ENCODE measurements at regions of chr17 and their contacts with region 1.

Region 1: GRCh38 chr17:79612468-79613194 is 1.8 kb upstream of the RBFOX3 start:
- DNase-seq: peak; percentile 92
- H3K4me3 ChIP-seq: no peak overlapping the region; a peak in 1 of 4 replicates
- H3K27ac ChIP-seq: no peak overlapping the region
- H3K4me1 ChIP-seq: no peaks in the 10 kb centered on the region
- H3K27me3 ChIP-seq: peaks cover 57% of the 10 kb centered on the region
- CTCF ChIP-seq: peak; percentile 73
- EP300 ChIP-seq: no peak
- RAD21 ChIP-seq: peak; percentile 85

Region 2: GRCh38 chr17:79406316-79406715 is 206.3 kb before region 1 on chr17:
- CTCF ChIA-PET with region 1: interaction called, 27 read pairs
- POLR2A ChIA-PET with region 1: no interaction called
- DNase-seq: no peak
- H3K4me3 ChIP-seq: no peak overlapping the region
- H3K27ac ChIP-seq: no peak overlapping the region
- H3K4me1 ChIP-seq: peaks cover 0 to 2% of the 10 kb centered on the region in 2 experiments; a peak in 1 of 4 replicates
- H3K27me3 ChIP-seq: peaks cover 56% of the 10 kb centered on the region
- CTCF ChIP-seq: no peak
- EP300 ChIP-seq: no peak
- RAD21 ChIP-seq: no peak

Region 3: GRCh38 chr17:79427623-79428539 is 184.8 kb before region 1 on chr17:
- CTCF ChIA-PET with region 1: interaction called, 14 read pairs
- POLR2A ChIA-PET with region 1: no interaction called
- DNase-seq: no peak
- H3K4me3 ChIP-seq: no peak overlapping the region
- H3K27ac ChIP-seq: no peak overlapping the region
- H3K4me1 ChIP-seq: no peaks in the 10 kb centered on the region
- H3K27me3 ChIP-seq: 0 out of 2 replicates have a peak, but pooled peaks cover 3% of the 10 kb centered on the region
- CTCF ChIP-seq: no peak
- EP300 ChIP-seq: no peak
- RAD21 ChIP-seq: no peak

Region 4: DNA sequence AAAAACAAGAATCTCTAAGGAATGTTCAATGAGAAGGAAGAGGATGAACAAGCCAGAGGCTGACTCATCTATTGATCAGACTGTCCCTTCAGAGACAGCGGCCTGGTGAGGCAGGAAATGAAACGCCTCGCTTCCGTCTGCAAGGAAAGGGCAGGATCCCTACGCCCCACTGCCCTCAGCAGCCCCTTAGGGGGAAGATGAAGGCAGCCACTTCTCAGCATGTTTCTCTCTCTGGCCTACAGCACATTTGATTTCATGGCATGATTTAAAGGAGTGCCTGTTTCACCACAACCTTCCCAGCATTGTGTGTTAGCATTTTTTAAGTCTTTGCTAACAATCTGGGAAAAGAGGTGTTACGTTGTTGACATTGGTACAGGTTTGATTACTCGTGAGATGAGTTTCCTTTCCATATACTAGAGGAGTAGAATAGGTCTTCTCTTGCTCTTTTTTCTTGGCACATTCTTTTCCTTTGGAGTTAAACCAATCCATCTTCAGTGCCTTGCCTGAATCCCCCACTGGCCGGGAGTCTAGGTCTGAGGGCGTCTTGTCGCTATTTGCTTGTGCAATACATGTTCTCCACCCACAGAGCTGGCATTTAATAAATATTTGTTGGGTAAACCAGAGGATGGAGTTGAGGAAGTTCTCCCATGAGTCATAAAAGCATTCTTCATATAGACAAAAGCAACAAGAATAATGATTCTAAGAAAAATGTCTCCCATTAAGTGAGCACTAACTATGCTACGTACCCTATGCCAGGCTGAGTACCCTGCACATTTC is 49.2 kb before region 1 on chr17:
- CTCF ChIA-PET with region 1: interaction called, 23 read pairs
- POLR2A ChIA-PET with region 1: no interaction called
- DNase-seq: no peak
- H3K4me3 ChIP-seq: no peak overlapping the region
- H3K27ac ChIP-seq: no peak overlapping the region
- H3K4me1 ChIP-seq: peaks cover 0 to 17% of the 10 kb centered on the region in 2 experiments; a peak in 1 of 4 replicates
- H3K27me3 ChIP-seq: peaks cover 17% of the 10 kb centered on the region; the same call in 1 of the 2 replicates
- CTCF ChIP-seq: no peak
- EP300 ChIP-seq: no peak
- RAD21 ChIP-seq: no peak

Region 5: DNA sequence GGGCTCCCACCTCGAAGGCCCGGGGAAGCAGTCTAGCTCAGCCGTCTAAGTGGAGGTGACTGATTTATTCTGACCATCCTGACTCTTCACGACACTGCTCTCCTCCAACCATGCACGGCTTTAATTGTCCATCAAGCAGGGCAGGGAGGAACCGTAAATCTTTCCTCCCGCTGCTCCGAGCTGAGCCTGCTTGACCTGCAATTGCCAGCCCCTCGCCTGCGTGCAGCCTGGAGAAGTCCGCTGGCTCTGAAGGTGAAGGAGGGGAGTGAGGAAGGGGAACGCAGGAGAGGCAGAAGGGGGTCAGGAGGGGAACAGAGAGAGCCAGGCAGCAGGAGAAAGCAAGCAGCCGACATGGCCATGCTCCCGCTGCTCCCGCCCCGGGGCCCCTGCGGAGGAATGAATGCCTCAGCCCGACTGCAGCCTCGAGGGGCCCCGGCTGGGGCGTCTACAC is 11.9 kb before region 1 on chr17:
- CTCF ChIA-PET with region 1: interaction called, 63 read pairs
- POLR2A ChIA-PET with region 1: no interaction called
- DNase-seq: peak; percentile 60
- H3K4me3 ChIP-seq: no peak overlapping the region
- H3K27ac ChIP-seq: no peak overlapping the region
- H3K4me1 ChIP-seq: peaks cover 0 to 2% of the 10 kb centered on the region in 2 experiments; a peak in 1 of 4 replicates
- H3K27me3 ChIP-seq: peaks cover 58% of the 10 kb centered on the region
- CTCF ChIP-seq: no peak
- EP300 ChIP-seq: no peak
- RAD21 ChIP-seq: no peak

Region 6: GRCh38 chr17:79658811-79659207 is 46.2 kb after region 1 on chr17:
- CTCF ChIA-PET with region 1: interaction called, 14 read pairs
- POLR2A ChIA-PET with region 1: no interaction called
- DNase-seq: peak; percentile 77
- H3K4me3 ChIP-seq: peak overlapping the region in 1 of 2 experiments; percentile 23; a peak in 1 of 4 replicates
- H3K27ac ChIP-seq: no peak overlapping the region
- H3K4me1 ChIP-seq: no peaks in the 10 kb centered on the region; a peak in 1 of 4 replicates
- H3K27me3 ChIP-seq: peaks cover 14% of the 10 kb centered on the region; the same call in 1 of the 2 replicates
- CTCF ChIP-seq: peak; percentile 45
- EP300 ChIP-seq: no peak
- RAD21 ChIP-seq: peak; percentile 55